ENCODE measurements at regions of chr4 and their contacts with region 1.

Region 1: DNA sequence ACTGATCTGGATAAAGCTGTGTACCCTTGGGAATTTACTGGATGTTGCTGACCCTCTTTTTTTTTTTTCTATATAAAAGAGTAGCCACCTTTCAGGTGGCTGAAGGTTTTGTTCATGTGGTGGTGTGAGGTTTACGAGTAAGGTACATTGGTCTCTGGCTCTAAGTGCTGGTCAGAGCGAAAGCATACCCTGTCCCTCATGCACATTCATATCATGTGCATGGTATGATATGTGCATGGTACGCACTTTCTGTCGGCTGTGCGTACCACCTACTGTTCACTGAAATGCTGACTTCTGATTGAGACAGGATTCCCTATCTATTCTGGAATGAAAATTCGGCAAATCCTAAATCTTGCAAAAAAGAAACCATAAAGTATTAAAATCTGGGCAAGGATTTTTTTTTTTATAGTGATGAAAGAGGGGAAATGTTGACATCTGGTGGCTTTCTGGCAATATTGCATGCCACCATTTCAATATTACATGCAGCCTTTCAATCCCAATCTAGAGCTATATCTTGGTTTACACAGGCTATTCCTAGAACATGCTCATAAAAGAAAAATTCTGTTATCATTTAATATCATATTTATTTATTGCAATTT is 32.8 kb downstream of the FAM149A start:
- DNase-seq: no peak
- ATAC-seq: no peak
- H3K4me3 ChIP-seq: no peak overlapping the region
- H3K27ac ChIP-seq: no peak overlapping the region
- H3K4me1 ChIP-seq: no peaks in the 10 kb centered on the region
- H3K27me3 ChIP-seq: no peaks in the 10 kb centered on the region
- CTCF ChIP-seq: peak; percentile 68

Region 2: GRCh38 chr4:186067757-186068385 is 69.4 kb before region 1 on chr4:
- CTCF ChIA-PET with region 1: interaction called, 11 read pairs
- POLR2A ChIA-PET with region 1: no interaction called
- in situ Hi-C with region 1: no loop called
- intact Hi-C with region 1: loop called (anchors 1 kb)
- DNase-seq: peak; percentile 25
- ATAC-seq: peak; percentile 94
- H3K4me3 ChIP-seq: no peak overlapping the region
- H3K27ac ChIP-seq: no peak overlapping the region
- H3K4me1 ChIP-seq: no peaks in the 10 kb centered on the region
- H3K27me3 ChIP-seq: no peaks in the 10 kb centered on the region; the same call in 1 of the 2 replicates
- CTCF ChIP-seq: peak; percentile 69

Region 3: GRCh38 chr4:186191200-186192065 is 54.1 kb after region 1 on chr4 and contains the start of gene CYP4V2:
- CTCF ChIA-PET with region 1: no interaction called
- POLR2A ChIA-PET with region 1: no interaction called
- in situ Hi-C with region 1: no loop called
- intact Hi-C with region 1: no loop called
- DNase-seq: peak; percentile 8
- ATAC-seq: peak; percentile 91
- H3K4me3 ChIP-seq: peak within 1 kb of the TSS; percentile 60 to 63
- H3K27ac ChIP-seq: peak within 1 kb of the TSS; percentile 21; the same call in 1 of the 2 replicates
- H3K4me1 ChIP-seq: no peaks in the 10 kb centered on the region; the same call in 1 of the 2 replicates
- H3K27me3 ChIP-seq: no peaks in the 10 kb centered on the region
- CTCF ChIP-seq: peak; percentile 71
- total RNA-seq, gene CYP4V2: 1.1 TPM

Region 4: DNA sequence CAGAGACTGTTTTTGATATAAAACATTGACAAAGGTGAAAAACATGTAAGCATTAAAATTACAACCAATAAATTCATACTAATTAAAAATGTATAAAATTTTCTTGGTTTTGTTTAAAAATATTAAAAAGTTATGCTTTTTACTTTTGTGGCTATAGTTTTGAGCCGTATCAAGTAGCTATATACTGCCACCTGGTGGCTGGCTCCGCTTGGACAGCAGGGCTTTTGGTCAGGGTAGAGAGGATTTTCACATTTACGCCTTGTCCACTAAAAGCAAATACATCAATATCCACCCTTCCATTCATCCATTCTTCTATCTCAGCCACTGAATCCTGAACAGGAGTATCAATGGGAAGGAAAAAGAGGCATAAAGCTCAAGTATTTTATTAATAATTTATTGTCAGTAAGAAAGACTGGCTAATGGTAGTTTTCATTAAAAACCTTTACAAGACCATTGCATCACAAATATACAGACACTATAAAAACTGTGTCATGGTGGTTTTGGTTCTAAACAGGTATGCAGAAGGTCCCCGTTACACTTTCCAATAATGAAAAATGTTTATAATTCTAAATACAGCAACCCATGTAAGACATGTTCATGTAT is 450.2 kb after region 1 on chr4:
- CTCF ChIA-PET with region 1: no interaction called
- POLR2A ChIA-PET with region 1: no interaction called
- in situ Hi-C with region 1: no loop called
- intact Hi-C with region 1: no loop called
- DNase-seq: peak; percentile 12
- ATAC-seq: peak; percentile 81; the same call in 1 of the 2 replicates
- H3K4me3 ChIP-seq: no peak overlapping the region
- H3K27ac ChIP-seq: no peak overlapping the region
- H3K4me1 ChIP-seq: no peaks in the 10 kb centered on the region; the same call in 1 of the 2 replicates
- H3K27me3 ChIP-seq: no peaks in the 10 kb centered on the region
- CTCF ChIP-seq: peak; percentile 79